Common myeloid progenitor, CD34-positive (primary cell): ENCODE measurements at regions of chr1 and their contacts with region 1.

Region 1: GRCh38 chr1:43220905-43221778 is 48.6 kb upstream of the TMEM125 start:
- DNase-seq: peak in 2 of 3 donors; percentile 47 to 52
- H3K4me3 ChIP-seq: no peak overlapping the region
- H3K27ac ChIP-seq: no peak overlapping the region
- H3K4me1 ChIP-seq: peaks cover 0 to 8% (median 2%) of the 10 kb centered on the region in 4 experiments
- H3K27me3 ChIP-seq: no peaks in the 10 kb centered on the region

Region 2: GRCh38 chr1:43247256-43247921 is 26.2 kb after region 1 on chr1:
- CTCF ChIA-PET with region 1: no interaction called
- POLR2A ChIA-PET with region 1: no interaction called
- DNase-seq: no peak
- H3K4me3 ChIP-seq: no peak overlapping the region
- H3K27ac ChIP-seq: no peak overlapping the region
- H3K4me1 ChIP-seq: no peaks in the 10 kb centered on the region
- H3K27me3 ChIP-seq: no peaks in the 10 kb centered on the region

Region 3: GRCh38 chr1:43414634-43415223 is 193.6 kb after region 1 on chr1:
- CTCF ChIA-PET with region 1: interaction called, 39 read pairs
- POLR2A ChIA-PET with region 1: no interaction called
- DNase-seq: peak; percentile 82 to 91 (median 87)
- H3K4me3 ChIP-seq: no peak overlapping the region
- H3K27ac ChIP-seq: no peak overlapping the region
- H3K4me1 ChIP-seq: no peaks in the 10 kb centered on the region
- H3K27me3 ChIP-seq: no peaks in the 10 kb centered on the region